Activated T-helper 2 cell treated with anti-CD3 and anti-CD28 coated beads, Interferon-gamma antibody, Interleukin-2, Interleukin-4, amounts not matched to agents 10 μg/mL and 5 μg/mL and 100 μg/mL, durations not matched to agents 14 hours and 24 hours and 36 hours (primary cell): ENCODE measurements at regions of chr12 and their contacts with region 1.

Region 1: DNA sequence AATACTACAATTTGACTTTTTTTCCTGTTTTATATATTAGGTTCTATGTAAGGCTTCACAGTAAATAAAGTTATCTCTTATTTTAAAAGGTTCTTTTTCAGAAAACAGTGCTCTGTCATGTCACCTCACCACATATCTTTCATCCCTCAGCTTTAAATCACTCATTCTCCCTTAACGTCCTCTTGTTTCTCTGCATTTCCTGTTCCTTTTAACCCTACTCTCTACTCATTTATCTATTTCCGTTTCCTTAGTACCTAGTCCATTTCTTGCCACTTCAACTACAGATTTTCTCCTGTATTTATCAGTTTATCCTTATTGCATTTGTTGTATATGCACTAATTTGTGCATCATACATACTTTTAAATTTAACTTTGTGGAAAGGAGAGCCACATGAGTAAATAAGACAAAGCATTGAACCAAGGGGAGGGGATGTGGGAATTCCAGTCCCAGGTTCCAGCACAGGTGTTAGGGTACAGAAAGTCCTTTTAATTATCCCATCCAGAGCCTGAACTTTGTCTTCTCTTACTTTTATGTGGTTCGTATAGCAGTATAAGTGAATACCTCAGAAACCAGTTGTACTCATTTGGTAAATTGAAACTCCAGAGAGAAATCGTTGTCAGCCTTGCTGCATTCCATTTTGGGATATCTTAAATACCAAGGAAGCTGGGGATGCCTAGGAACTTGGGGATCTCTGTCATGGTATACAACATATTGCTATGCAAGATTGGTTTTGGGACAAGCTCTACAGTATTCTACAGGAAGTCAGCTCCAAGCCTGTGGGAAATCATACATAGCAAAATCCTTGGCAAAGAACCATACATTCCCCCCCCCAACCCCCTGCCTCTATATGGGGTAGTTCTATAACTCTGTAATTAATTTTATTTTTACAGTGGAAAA is 120.5 kb downstream of the DIP2B start:
- DNase-seq: no peak
- H3K4me3 Mint-ChIP-seq: peak overlapping the region; percentile 0
- H3K27ac Mint-ChIP-seq: peak overlapping the region; percentile 63
- H3K4me1 Mint-ChIP-seq: peaks cover 30% of the 10 kb centered on the region
- H3K27me3 Mint-ChIP-seq: no peaks in the 10 kb centered on the region

Region 2: DNA sequence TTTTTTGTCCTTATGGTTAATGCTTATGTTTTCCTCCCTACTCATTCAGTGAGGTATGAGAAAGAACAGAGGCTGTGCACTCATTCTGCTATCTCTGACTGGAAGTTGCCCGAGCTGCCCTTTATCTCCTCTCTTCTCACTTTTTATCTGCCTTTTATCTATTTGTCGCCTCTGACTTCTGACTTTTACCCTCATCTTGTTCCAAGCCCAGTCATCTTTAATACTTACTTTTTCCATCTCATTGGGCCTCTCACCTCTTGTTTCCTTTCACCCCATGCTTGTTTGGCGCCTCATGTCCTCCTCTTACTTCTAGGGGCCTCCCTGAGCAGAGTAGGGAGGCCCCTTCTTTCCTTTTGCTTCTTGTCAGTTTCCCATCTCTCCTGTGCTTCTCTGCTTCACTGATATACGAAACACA is 69.8 kb before region 1 on chr12:
- intact Hi-C with region 1: loop called (anchors 1 kb)
- DNase-seq: no peak
- H3K4me3 Mint-ChIP-seq: peak overlapping the region; percentile 44
- H3K27ac Mint-ChIP-seq: peak overlapping the region; percentile 95
- H3K4me1 Mint-ChIP-seq: peaks cover 33% of the 10 kb centered on the region
- H3K27me3 Mint-ChIP-seq: no peaks in the 10 kb centered on the region

Region 3: DNA sequence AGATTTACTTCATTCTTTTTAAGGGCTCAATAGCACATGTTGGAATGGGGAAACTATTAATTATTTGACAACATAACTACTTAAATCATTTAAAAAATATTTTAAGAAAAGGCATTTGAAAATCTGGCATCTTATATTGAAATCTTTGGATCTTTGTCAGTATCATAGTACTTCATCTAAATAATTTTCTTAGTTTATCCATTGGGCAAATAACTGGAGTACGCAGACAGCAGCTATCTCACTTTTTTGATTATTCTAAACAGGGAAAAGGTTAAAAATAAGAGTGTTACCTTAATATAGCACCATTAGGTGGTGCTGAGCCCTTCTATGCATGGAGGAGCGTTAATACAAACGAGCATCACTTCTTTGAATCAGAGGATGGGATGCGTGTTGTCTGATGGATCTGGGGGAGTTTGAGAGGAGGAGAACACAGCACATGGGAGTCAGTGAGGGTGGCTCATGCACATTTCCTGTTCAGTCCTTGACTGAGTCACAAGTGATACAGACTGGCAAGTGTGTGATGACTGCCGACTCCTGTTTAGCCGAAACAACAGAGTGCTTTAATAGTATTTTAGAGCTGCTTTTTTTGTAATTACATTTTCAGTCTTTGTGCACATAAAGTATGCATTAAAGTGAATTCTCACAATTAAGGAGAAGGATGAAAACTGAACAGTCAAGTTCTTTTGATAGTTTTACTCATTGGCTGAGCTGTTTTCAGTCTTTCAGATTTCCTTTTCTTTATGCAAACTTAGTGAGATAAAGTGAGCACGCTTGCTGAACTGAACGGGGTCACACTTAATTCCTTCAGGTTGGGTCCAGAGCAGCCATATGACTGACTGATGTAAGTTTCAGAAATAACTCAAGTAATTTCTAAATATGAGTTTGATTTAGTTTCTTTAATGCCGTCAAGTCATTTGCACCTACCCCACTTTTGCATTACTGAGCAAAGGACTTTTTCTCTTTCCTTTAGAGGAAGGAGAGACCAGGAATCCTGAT is 27.8 kb before region 1 on chr12:
- intact Hi-C with region 1: no loop called
- DNase-seq: peak; percentile 19
- H3K4me3 Mint-ChIP-seq: peak overlapping the region; percentile 10
- H3K27ac Mint-ChIP-seq: peak overlapping the region; percentile 47
- H3K4me1 Mint-ChIP-seq: peaks cover 27% of the 10 kb centered on the region
- H3K27me3 Mint-ChIP-seq: no peaks in the 10 kb centered on the region